CD14-positive monocyte (primary cell): ENCODE measurements at regions of chr12 and their contacts with region 1.

Region 1: DNA sequence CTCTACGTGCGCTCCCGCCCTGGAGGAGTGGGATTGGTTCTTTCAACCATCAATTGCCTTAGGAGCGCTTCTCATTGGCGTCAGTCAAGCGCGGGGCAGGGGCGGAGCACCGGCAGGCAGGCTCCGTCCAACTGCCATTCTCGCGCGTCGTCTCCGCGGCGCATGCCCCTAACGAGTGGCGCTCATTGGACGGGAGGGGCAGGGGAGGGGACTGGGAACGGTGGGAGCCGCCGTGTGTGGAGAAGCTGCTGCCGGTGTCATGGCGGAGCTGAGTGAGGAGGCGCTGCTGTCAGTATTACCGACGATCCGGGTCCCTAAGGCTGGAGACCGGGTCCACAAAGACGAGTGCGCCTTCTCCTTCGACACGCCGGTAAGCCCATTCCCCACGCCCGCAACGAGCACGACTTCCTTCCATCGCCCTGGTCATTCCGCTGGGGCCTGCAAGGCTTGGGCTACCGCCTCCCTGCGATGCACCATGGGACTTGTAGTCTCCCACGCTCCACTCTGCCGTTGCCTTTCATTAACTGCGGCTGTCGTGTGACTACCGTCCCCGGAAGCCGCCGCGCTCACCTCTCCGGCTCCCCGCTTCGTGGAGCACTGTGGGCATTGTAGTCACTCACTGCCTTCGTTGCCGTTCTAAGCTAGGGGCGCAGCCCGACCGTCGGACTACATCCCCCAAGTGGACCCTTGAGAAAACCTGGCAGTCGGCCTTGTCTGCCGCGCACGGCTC is at the start of gene USP5:
- DNase-seq: peak; percentile 98 to 100 (median 99)
- H3K4me3 ChIP-seq: peak within 1 kb of the TSS; percentile 56 to 93 (median 71)
- H3K4me3 Mint-ChIP-seq: peak within 1 kb of the TSS; percentile 98
- H3K27ac ChIP-seq: peak within 1 kb of the TSS; percentile 73 to 85
- H3K27ac Mint-ChIP-seq: peak within 1 kb of the TSS; percentile 95 to 99 (median 99)
- H3K4me1 ChIP-seq: peaks cover 29 to 35% of the 10 kb centered on the region in 2 donors
- H3K4me1 Mint-ChIP-seq: peaks cover 28% of the 10 kb centered on the region
- H3K27me3 ChIP-seq: no peaks in the 10 kb centered on the region
- H3K27me3 Mint-ChIP-seq: no peaks in the 10 kb centered on the region
- CTCF ChIP-seq: no peak
- polyA plus RNA-seq, gene USP5: 28.0 to 32.4 (median 29.9) TPM

Region 2: DNA sequence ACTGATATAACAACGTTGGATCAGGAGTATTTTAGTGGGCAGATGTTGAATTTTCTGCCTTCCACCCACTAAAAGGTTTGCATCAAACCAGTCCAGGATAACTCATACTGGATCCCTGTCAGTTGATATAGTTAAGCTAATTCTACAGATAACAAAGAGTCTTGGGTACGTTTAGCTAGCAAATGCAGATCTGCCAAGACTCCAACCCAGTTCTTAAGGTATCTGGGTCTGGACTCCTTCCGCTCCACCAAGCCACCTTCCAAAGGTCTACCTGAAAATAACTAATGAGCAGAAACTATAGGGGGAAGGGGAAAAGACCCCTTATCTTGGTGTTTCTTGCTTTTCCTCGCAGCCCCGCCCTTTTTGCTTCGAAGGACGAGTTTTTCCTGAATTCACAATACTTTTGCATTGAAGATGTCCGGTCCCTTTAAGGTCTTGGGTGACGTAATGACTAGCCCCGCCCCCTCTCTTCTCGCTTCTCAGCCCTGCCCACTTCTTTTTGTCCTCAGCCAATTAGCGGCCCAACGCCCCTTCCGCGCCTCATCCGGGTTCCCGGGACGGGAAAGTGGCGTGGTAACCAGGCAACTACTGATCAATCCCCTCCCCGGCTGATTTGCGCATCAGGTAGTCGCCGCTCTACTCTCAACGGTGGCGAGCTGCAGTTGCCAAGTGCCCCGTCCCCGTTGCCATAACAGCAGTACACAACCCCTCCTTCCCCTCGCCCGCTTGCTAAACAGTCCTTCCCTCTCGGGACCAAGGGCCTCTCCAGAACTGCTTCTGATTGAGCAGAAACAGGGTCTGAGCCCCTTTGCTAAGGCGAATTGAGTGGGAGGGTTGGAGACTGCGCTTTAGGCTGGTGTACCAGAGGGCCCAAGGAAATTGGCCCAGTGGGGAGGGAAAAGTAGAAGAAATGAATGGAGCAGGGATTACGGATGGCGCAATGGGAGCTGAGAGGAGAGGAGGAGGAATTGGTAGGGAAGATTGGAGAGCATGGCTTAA is 52.5 kb after region 1 on chr12 and contains the start of gene LRRC23:
- intact Hi-C with region 1: loop called in 1 of 2 experiments (anchors 10 kb)
- DNase-seq: peak; percentile 89 to 93 (median 92)
- H3K4me3 ChIP-seq: peak within 1 kb of the TSS; percentile 77 to 89 (median 89)
- H3K4me3 Mint-ChIP-seq: no peak within 1 kb of the TSS
- H3K27ac ChIP-seq: peak within 1 kb of the TSS; percentile 41 to 84
- H3K27ac Mint-ChIP-seq: peak within 1 kb of the TSS in 1 of 7 donors; percentile 73
- H3K4me1 ChIP-seq: peaks cover 20 to 23% of the 10 kb centered on the region in 2 donors
- H3K4me1 Mint-ChIP-seq: peaks cover 9% of the 10 kb centered on the region
- H3K27me3 ChIP-seq: no peaks in the 10 kb centered on the region
- H3K27me3 Mint-ChIP-seq: no peaks in the 10 kb centered on the region
- CTCF ChIP-seq: no peak
- polyA plus RNA-seq, gene LRRC23: 4.9 to 6.8 (median 5.1) TPM